ENCODE measurements at regions of chr1 and their contacts with region 1.

Region 1: DNA sequence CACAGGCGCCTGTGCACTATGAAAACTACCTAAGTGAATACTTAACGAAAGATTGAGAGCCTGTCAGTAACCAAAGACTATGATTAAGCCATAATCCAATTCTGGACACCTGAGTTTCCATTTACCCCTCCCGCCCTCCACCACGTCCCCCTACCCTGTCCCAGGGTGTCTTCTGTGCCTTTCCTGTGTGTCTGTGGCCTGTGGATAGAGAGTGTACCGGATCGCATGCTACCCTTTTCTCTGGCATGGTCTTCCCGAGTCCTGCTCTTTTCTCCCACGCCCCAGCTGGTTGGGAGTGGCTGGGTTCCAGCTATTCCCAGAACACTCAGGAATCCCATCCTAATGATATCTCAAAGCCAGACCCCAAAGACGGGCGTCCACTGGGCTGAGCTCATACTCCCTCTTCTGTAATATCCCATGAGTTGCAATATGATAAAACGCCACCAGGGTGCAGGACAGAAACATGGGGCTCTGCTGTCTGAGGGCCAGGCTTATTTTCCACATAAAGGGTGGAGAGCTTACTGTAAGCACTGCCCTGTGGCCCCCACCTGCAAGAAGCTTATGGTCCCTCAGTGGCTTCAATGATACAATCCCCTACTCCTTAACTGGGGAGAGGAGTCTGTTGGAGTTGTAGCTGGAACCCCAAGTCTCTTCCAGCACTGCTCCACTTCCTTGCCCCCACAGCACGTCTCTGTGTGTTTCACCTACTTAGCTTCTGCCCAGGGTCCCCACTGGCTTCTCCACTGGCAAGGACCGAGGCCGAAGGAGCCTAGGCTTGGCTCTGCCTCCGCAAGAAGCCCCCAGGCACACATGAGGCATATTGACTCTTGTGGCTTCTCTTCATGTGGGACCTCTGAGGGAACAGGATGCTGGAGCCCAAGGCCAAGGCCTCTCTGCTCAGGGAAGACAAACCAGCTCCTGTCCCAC is 17.6 kb upstream of the ALX3 start:
- DNase-seq: peak; percentile 20
- ATAC-seq: peak; percentile 87
- H3K4me3 ChIP-seq: no peak overlapping the region
- H3K27ac ChIP-seq: no peak overlapping the region
- H3K4me1 ChIP-seq: no peaks in the 10 kb centered on the region
- H3K27me3 ChIP-seq: peaks cover 8% of the 10 kb centered on the region
- CTCF ChIP-seq: peak; percentile 80

Region 2: GRCh38 chr1:109984456-109985275 is 103.4 kb before region 1 on chr1 and contains the start of gene AHCYL1:
- CTCF ChIA-PET with region 1: no interaction called
- POLR2A ChIA-PET with region 1: no interaction called
- in situ Hi-C with region 1: no loop called
- intact Hi-C with region 1: no loop called
- DNase-seq: peak; percentile 86
- ATAC-seq: peak; percentile 95
- H3K4me3 ChIP-seq: peak within 1 kb of the TSS; percentile 88 to 90
- H3K27ac ChIP-seq: peak within 1 kb of the TSS; percentile 95
- H3K4me1 ChIP-seq: peaks cover 52% of the 10 kb centered on the region
- H3K27me3 ChIP-seq: no peaks in the 10 kb centered on the region
- CTCF ChIP-seq: peak; percentile 92
- total RNA-seq, gene AHCYL1: 174 TPM

Region 3: DNA sequence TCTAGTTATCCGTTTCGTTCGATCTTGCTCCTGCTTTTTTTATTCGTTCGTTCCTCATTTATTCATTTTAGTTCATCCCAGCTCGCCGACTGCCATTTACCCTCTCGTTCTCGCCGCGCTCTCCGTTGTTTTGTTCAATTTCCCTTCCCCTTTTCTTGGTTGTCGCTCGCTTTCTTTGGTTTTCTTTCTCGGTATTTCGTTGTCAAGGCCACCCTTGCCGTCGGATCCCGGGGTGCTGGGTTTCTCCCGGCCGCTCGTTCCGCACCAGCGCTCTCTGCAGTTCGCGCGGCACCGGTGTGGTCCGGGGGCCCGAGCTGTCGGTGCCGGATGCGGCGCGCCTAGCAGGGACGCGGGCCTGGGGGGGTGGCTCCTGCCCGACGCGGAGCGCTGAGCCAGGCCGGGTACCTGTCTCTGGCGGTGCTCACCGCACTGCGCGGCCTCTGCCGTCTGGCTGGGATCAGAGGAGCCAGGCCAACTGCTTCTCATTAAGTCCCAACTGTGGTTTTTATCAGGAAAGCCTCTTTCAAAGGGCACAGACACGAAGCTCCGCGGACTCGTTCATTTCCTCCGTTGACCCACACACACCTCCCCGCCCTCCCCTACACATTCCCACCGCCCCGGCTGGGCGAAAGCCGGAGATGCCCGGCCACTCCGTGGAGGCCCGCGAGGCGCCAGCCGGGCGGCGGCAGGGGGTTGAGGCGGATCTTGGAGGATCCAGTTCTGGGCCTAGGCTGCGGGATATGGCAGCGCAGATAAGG is 19.2 kb before region 1 on chr1:
- CTCF ChIA-PET with region 1: interaction called, 3 read pairs
- POLR2A ChIA-PET with region 1: no interaction called
- in situ Hi-C with region 1: no loop called
- intact Hi-C with region 1: loop called (anchors 1 kb)
- DNase-seq: no peak
- ATAC-seq: no peak
- H3K4me3 ChIP-seq: no peak overlapping the region
- H3K27ac ChIP-seq: no peak overlapping the region
- H3K4me1 ChIP-seq: no peaks in the 10 kb centered on the region
- H3K27me3 ChIP-seq: no peaks in the 10 kb centered on the region
- CTCF ChIP-seq: no peak

Region 4: DNA sequence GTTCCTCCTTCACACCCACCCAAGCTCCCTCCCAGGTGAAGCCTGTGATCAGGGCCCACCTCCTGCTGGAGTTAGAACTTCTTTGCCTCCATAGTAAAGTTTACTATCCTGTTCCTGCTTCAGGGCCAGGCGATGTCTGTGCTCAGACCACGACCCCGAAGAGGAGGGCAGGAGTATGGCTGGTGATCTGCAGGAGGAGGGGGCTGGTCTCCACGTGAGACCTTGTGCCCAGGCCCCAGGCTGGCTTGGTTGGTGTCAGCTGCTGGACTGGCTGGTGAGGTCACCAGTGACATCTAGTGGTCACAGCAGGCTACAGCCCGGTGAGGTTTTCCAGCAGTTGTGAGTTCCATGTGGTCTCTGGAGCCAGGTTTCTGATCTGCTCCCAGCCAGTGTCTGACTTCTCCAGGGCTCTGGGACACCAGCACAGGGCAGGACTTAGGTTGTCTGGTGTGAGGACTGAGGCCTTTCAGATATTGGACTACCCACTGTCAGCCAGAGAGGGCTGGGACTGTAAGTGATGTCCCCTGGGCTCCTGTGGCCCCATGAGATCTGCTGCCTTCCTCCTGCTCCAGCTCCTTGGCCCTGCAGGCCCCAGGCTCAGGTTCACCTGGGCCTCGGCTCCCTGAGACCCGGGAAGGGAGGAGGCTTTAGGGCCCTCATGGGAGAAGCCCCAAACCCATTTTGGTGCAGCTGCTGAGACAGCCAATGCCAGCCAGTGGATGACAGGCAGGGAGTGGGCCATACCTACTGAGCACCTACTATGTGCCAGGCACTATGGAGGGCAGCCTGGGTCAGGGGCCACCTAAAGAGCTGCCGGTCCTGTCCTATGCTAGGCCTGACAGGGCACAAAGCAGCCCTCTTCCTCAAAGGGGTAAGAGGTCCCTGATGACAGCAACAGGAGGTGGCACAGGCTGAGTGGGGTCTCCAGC is 18.2 kb after region 1 on chr1:
- CTCF ChIA-PET with region 1: interaction called, 22 read pairs
- POLR2A ChIA-PET with region 1: no interaction called
- in situ Hi-C with region 1: no loop called
- intact Hi-C with region 1: no loop called
- DNase-seq: peak; percentile 50
- ATAC-seq: peak; percentile 93
- H3K4me3 ChIP-seq: no peak overlapping the region
- H3K27ac ChIP-seq: no peak overlapping the region
- H3K4me1 ChIP-seq: no peaks in the 10 kb centered on the region
- H3K27me3 ChIP-seq: no peaks in the 10 kb centered on the region; the same call in 1 of the 2 replicates
- CTCF ChIP-seq: peak; percentile 91

Region 5: GRCh38 chr1:110176299-110176956 is 88.4 kb after region 1 on chr1:
- CTCF ChIA-PET with region 1: no interaction called
- POLR2A ChIA-PET with region 1: no interaction called
- in situ Hi-C with region 1: no loop called
- intact Hi-C with region 1: no loop called
- DNase-seq: no peak
- ATAC-seq: no peak
- H3K4me3 ChIP-seq: no peak overlapping the region
- H3K27ac ChIP-seq: no peak overlapping the region
- H3K4me1 ChIP-seq: no peaks in the 10 kb centered on the region
- H3K27me3 ChIP-seq: no peaks in the 10 kb centered on the region
- CTCF ChIP-seq: no peak

Measured in Panc1 (cell line).